Activated CD4-positive, alpha-beta T cell treated with anti-CD3 and anti-CD28 coated beads for 36 hours (primary cell): ENCODE measurements at regions of chr17 and their contacts with region 1.

Region 1: DNA sequence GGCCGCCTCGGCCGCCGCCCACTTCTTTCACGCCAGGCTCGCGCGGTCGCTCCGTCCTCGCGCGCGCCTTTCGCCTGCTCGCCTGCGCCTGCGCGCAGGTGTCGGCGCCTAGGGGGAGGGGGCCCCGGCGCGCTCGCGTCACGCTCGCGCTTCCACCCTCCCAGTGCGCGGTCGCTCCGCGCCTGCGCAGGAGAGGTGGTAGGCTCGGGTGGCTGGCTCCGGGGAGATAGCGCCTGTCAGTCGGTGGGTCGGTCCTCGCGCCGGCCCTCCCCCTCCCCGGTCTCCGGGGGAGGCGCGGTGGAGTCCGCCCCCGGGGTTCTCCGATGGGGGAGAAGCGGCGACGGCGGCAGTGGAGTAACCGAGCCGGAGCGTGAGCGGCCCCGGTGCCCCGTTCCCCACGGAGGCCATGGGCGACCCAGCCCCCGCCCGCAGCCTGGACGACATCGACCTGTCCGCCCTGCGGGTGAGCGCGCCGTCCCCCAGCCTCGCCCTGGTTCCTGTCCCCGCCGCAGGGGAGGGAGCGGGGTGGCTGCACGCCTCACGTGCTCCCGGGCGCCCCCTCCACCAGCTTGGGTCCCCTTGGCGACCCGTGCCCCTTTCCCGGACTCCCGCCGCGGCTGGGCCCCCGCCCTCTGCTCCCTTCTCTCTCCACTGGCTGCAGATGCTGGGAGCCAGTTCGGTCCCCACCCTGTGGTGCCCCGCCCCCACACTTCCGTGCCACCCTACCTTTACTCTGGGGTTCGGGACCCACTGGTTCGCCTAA is at the start of gene MINK1:
- DNase-seq: peak; percentile 92
- ATAC-seq: peak; percentile 93
- H3K4me3 Mint-ChIP-seq: peak within 1 kb of the TSS; percentile 90
- H3K27ac Mint-ChIP-seq: peak within 1 kb of the TSS; percentile 91
- H3K4me1 Mint-ChIP-seq: peaks cover 28% of the 10 kb centered on the region
- H3K27me3 Mint-ChIP-seq: no peaks in the 10 kb centered on the region
- total RNA-seq, gene MINK1: 48.2 to 57.7 TPM

Region 2: GRCh38 chr17:3965118-3965803 is 868.1 kb before region 1 on chr17:
- CTCF ChIA-PET with region 1: no interaction called
- POLR2A ChIA-PET with region 1: no interaction called
- intact Hi-C with region 1: loop called in 1 of 2 experiments (anchors 1 kb)
- DNase-seq: peak; percentile 86
- ATAC-seq: peak; percentile 75
- H3K4me3 Mint-ChIP-seq: peak overlapping the region; percentile 81
- H3K27ac Mint-ChIP-seq: peak overlapping the region; percentile 93
- H3K4me1 Mint-ChIP-seq: peaks cover 40% of the 10 kb centered on the region
- H3K27me3 Mint-ChIP-seq: no peaks in the 10 kb centered on the region

Region 3: DNA sequence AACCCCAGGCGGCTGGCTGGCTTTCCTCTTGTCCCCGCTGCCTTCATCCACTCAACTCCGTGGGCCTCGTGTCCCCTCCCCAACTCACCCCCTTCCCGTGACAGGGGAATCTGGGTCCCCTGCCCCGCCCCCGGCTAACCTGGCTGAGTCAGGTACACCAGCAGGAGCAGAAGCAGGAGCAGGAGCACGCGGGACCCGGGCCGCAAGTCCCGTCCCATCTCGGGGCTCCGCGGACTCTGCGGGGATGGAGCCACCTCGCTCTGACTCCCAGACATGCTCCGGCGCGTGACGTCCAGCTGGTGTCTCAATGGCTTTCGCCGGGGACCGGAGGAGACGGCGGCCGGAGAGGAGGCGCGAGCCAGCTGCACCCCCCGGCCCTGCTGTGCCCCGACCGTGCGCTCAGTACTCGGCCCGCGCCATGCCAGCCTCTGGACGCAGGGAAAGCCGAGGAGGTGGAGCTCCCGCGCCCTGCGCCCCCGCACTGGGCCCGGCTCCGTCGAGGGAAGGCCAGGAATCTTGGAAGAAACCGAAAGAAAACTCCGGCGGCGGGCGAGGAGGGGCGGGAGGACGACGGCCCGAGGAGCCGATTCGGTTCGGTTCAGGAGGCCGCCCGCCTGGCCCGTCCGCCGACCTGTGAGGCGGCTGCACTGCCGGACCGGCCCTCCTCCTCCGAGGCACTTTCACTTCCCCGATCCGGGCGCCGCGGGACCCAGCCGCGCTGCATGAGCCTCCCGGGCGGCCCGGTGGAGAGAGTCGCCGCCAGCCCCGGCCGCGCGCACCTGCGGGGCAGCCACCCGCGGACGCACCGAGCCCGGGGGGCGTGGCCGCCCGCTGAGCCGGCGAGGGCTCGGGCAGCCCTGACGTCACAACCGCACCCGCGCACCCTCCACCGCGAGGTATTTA is 94.0 kb before region 1 on chr17 and contains the starts of genes CXCL16 and ZMYND15:
- CTCF ChIA-PET with region 1: no interaction called
- POLR2A ChIA-PET with region 1: no interaction called
- intact Hi-C with region 1: loop called in 1 of 2 experiments (anchors 2 kb)
- DNase-seq: peak; percentile 67
- ATAC-seq: peak; percentile 47
- H3K4me3 Mint-ChIP-seq: peak within 1 kb of the TSS; percentile 70
- H3K27ac Mint-ChIP-seq: peak within 1 kb of the TSS; percentile 37
- H3K4me1 Mint-ChIP-seq: peaks cover 25% of the 10 kb centered on the region
- H3K27me3 Mint-ChIP-seq: peaks cover 21% of the 10 kb centered on the region
- total RNA-seq, gene CXCL16: 1.7 to 2.5 TPM
- total RNA-seq, gene ZMYND15: 0.09 to 0.11 TPM

Region 4: GRCh38 chr17:4796553-4796921 is 36.8 kb before region 1 on chr17:
- CTCF ChIA-PET with region 1: no interaction called
- POLR2A ChIA-PET with region 1: no interaction called
- intact Hi-C with region 1: loop called in 1 of 2 experiments (anchors 1 kb)
- DNase-seq: peak; percentile 58
- ATAC-seq: no peak
- H3K4me3 Mint-ChIP-seq: peak overlapping the region; percentile 94
- H3K27ac Mint-ChIP-seq: peak overlapping the region; percentile 97
- H3K4me1 Mint-ChIP-seq: peaks cover 24% of the 10 kb centered on the region
- H3K27me3 Mint-ChIP-seq: peaks cover 3% of the 10 kb centered on the region

Region 5: DNA sequence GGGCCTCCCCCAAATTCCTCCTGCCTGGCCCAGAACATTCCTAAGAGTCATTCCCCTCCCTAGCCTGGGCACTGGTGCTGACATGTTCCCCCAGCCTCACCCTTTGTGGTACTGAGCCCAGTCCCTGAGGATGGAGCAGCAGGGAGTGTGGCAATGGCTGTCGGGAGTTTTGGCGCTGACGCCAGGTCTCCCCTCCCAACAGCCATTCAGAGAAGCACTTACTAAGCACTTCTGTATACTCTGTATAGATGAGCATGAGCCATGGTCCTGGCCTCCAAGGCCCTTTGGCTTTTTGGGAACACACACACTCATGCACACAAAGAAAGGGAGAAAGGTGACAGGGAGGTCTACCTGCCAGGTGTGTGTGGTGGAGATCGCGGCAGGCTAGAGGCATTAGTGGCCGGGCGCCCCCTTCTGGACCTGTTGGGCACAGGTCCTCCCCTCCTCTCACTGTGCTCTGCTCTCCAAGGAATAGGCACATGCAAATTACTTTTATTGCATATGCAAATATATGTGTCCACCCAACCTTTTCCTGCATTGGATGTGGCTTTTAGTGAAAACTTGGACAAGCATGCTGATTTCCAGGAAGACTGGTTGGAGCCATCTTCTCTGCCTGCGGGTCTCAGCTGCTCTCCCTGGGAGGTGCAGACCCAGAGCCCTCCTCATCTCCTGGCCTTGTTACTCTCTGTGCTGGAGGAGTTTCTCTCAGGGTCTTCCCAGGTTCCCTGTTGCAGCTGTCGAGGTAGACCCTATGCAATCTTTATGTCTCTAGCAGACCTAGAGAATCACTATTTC is 48.6 kb after region 1 on chr17:
- CTCF ChIA-PET with region 1: no interaction called
- POLR2A ChIA-PET with region 1: no interaction called
- intact Hi-C with region 1: loop called in 1 of 2 experiments (anchors 5 kb)
- DNase-seq: peak; percentile 84
- ATAC-seq: peak; percentile 94
- H3K4me3 Mint-ChIP-seq: no peak overlapping the region
- H3K27ac Mint-ChIP-seq: no peak overlapping the region
- H3K4me1 Mint-ChIP-seq: no peaks in the 10 kb centered on the region
- H3K27me3 Mint-ChIP-seq: no peaks in the 10 kb centered on the region

Region 6: DNA sequence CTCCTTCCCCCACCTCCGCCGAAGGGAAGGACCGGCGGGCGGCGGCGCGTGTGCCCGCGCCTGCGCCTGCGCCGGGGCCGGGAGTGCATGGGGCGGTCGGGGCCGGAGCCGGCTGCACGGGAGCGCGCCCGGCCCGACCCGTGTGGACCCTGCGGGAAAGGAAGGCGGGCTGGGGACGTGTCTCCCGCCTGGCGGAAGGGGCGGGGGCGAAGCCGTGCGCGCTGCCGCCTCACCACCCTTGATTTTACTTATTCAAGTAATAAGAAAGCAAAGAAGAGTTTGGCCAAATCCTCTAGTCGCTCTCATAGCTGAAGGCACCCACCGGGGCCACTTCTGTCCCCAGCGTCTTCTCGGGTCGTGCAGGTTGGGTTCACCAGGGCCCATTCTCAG is 115.6 kb after region 1 on chr17:
- CTCF ChIA-PET with region 1: no interaction called
- POLR2A ChIA-PET with region 1: no interaction called
- intact Hi-C with region 1: loop called in 1 of 2 experiments (anchors 2 kb)
- DNase-seq: peak; percentile 88
- ATAC-seq: peak; percentile 39
- H3K4me3 Mint-ChIP-seq: peak overlapping the region; percentile 99
- H3K27ac Mint-ChIP-seq: peak overlapping the region; percentile 100
- H3K4me1 Mint-ChIP-seq: peaks cover 34% of the 10 kb centered on the region
- H3K27me3 Mint-ChIP-seq: no peaks in the 10 kb centered on the region